Dorsolateral prefrontal cortex (tissue), 120 donors: ENCODE measurements at regions of chr11 and their contacts with region 1.

Region 1: DNA sequence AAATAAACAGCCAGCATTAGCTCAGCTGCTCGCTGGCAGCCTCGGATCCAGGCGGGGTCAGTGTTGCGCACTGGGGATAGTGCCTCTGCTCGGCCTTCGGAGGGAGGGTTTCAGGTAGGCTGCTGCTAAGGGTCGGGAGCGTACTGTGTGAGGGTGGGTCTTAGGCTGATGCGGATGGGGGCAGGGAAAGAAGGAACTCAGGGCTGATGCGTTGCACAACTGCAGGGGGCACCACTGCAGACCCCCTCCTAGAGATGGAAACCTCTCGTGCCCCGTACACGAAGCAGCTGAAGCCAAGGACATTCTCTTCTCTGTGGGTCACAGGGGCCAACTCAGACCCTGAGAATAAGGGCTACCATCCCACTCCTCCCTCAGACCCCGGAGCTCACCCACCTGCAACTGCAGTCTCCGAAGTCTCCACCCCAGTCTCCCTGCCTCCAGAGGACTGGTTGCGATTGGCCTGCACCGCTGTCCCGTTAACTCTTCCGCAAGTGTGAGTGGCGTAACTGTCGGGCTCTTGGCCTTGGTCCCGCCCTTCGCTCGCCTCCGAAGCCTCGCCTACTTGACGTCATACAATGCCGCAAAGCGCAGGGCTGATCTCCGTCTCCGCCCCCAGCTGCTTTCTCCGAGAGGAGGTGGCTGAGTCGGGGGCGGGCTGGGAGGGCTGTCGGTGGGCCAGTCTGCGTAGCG is at the start of gene KBTBD3:
- DNase-seq: peak; percentile 98 to 100 (median 100)
- H3K4me3 ChIP-seq: peak within 1 kb of the TSS; percentile 54 to 98 (median 87)
- H3K27ac ChIP-seq: peak within 1 kb of the TSS; percentile 92 to 100 (median 99)
- H3K27me3 ChIP-seq: no peaks in the 10 kb centered on the region
- CTCF ChIP-seq: peak in 40 of 56 donors; percentile 1 to 61 (median 32)
- total RNA-seq, gene KBTBD3: 23.0 to 64.6 (median 36.0) TPM

Region 2: GRCh38 chr11:105899772-105900171 is 177.3 kb before region 1 on chr11:
- intact Hi-C with region 1: loop called in 1 of 2 experiments (anchors 10 kb)
- DNase-seq: no peak
- H3K4me3 ChIP-seq: peak overlapping the region in 21 of 59 donors; percentile 0 to 45 (median 14)
- H3K27ac ChIP-seq: peak overlapping the region in 58 of 59 donors; percentile 49 to 98 (median 92)
- H3K27me3 ChIP-seq: no peaks in the 10 kb centered on the region
- CTCF ChIP-seq: peak in 8 of 56 donors; percentile 6 to 26 (median 14)

Region 3: DNA sequence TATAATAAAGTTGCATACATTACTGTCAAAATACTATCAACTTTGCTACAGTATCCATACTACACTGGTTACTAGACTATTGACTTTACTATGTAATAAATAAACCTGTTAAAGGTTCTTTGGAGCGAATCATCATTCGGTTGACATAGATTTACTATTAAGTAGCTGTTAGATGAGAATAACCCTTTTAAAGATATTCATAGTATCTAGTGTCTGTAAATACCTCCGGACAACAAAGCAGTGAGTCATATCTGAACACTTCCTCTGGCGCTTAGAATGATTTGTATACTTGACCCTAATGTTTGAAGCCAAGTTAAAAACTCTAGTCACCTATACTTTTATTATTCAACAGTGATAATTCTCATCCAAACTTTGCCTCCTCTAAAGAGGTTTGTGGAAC is 139.7 kb before region 1 on chr11:
- intact Hi-C with region 1: loop called (anchors 5 to 10 kb)
- DNase-seq: no peak
- H3K4me3 ChIP-seq: no peak overlapping the region
- H3K27ac ChIP-seq: peak overlapping the region in 51 of 59 donors; percentile 1 to 85 (median 63)
- H3K27me3 ChIP-seq: no peaks in the 10 kb centered on the region
- CTCF ChIP-seq: no peak

Region 4: GRCh38 chr11:105942921-105943320 is 134.1 kb before region 1 on chr11:
- intact Hi-C with region 1: loop called (anchors 5 to 10 kb)
- DNase-seq: no peak
- H3K4me3 ChIP-seq: no peak overlapping the region
- H3K27ac ChIP-seq: peak overlapping the region in 25 of 59 donors; percentile 1 to 71 (median 25)
- H3K27me3 ChIP-seq: no peaks in the 10 kb centered on the region
- CTCF ChIP-seq: no peak

Region 5: DNA sequence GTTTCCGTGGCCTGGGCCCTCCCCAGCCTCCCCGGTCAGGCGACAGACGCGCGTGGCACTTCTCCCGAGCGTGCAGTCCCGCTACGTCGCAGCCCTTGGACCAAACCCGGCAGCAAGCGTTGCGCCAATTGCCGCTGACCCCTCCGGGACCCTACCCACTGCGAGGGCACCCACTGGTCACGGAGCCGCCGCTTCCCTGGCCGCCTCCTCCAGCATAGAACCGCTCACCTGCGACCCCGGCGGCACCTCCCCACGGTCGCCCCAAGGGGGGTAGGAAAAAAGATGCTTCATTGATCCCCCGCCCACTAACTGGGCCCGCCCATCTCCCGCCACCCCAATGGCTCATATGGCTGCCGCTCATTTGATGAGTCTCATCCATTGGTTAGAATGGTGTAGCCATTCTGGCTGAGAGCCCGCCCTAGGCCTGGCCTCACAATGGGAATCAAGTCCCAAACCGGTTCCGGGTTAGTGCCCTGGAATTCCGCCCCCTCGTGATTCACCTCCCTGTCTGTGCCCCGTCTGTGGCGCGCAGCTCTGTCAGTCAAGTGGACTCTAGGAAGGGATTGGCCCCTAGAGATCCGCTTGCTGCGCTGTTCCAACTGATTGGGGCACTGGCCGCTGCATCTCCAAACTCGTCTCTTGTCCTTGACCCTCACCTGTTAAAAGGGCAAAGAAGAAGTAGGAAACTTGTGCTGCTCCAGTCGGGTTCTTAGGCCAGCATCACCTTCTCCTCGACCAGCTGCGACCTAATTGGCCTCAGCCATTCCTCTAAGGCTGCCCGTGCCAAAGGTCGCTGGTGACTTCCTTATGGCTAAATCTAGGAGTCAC is 54.9 kb before region 1 on chr11 and contains the start of gene MSANTD4:
- intact Hi-C with region 1: loop called (anchors 2 to 5 kb)
- DNase-seq: peak; percentile 99 to 100 (median 100)
- H3K4me3 ChIP-seq: peak within 1 kb of the TSS; percentile 61 to 100 (median 93)
- H3K27ac ChIP-seq: peak within 1 kb of the TSS; percentile 56 to 96 (median 90)
- H3K27me3 ChIP-seq: no peaks in the 10 kb centered on the region
- CTCF ChIP-seq: peak in 35 of 56 donors; percentile 5 to 65 (median 28)
- total RNA-seq, gene MSANTD4: 40.4 to 82.2 (median 55.3) TPM

Region 6: GRCh38 chr11:106231591-106231990 is 154.5 kb after region 1 on chr11:
- intact Hi-C with region 1: no loop called
- DNase-seq: no peak
- H3K4me3 ChIP-seq: no peak overlapping the region
- H3K27ac ChIP-seq: no peak overlapping the region
- H3K27me3 ChIP-seq: no peaks in the 10 kb centered on the region
- CTCF ChIP-seq: peak in 5 of 56 donors; percentile 5 to 19 (median 14)

Region 7: GRCh38 chr11:107017433-107018227 is 940.6 kb after region 1 on chr11:
- intact Hi-C with region 1: loop called in 1 of 2 experiments (anchors 5 kb)
- DNase-seq: peak in 9 of 10 donors; percentile 49 to 81 (median 57)
- H3K4me3 ChIP-seq: peak overlapping the region; percentile 39 to 81 (median 63)
- H3K27ac ChIP-seq: peak overlapping the region in 47 of 59 donors; percentile 10 to 89 (median 64)
- H3K27me3 ChIP-seq: peaks cover 0 to 4% (median 0%) of the 10 kb centered on the region in 45 donors
- CTCF ChIP-seq: peak; percentile 15 to 79 (median 58)